CD14-positive monocyte (primary cell): ENCODE measurements at regions of chr6 and their contacts with region 1.

Region 1: DNA sequence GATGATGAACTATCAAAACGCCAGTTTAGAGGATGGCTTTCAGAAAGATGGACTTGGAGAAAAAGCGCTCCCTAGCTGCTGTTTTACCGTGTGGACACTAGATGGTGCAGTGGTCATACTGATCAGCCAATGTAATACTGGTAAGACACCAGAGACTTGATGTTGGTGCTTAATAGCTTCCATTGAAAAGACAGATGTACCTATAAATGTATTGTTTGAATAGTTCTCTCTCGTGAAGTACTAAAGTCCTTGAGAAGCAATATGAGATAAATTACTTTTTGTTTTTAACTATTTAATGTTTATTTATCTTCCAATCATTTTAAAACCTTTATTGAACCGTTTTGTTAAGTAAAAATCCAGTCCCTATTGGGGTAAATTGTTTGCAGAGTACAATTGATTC is 63.9 kb upstream of the FUCA2 start:
- DNase-seq: peak; percentile 60 to 80 (median 70)
- H3K4me3 ChIP-seq: no peak overlapping the region
- H3K4me3 Mint-ChIP-seq: no peak overlapping the region
- H3K27ac ChIP-seq: no peak overlapping the region
- H3K27ac Mint-ChIP-seq: no peak overlapping the region
- H3K4me1 ChIP-seq: peaks cover 3 to 6% of the 10 kb centered on the region in 2 donors
- H3K4me1 Mint-ChIP-seq: peaks cover 8% of the 10 kb centered on the region
- H3K27me3 ChIP-seq: no peaks in the 10 kb centered on the region
- H3K27me3 Mint-ChIP-seq: peaks cover 0 to 2% (median 0%) of the 10 kb centered on the region in 3 donors
- CTCF ChIP-seq: peak; percentile 86

Region 2: DNA sequence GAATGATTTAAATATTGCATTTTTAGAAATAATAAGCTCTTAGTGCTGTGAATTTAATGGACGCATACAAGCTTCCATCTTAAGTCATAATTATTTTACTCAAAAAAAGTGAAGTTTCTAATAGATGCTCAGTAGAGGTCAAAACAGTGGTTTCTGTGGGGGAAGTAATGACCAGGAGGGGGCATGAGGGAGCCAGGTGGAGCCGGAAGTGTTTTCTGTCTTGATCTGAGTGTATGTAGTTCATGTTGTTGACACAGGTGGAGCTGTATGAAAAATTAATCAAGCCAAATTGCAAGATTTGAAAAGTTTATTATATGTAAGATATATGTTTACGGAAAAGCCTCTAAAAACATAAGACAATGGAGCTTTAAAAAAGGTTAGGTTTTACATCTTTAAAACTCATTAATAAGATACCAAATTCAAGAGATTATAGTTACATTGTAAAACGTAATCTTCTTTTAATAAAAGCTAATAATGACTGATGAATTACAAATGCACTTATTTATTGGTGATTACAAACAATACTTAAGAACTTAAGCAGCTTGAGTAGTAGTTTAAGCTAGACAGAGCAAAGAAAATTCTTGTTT is 364.7 kb after region 1 on chr6:
- intact Hi-C with region 1: loop called in 1 of 2 experiments (anchors 5 kb)
- DNase-seq: peak; percentile 36 to 52 (median 42)
- H3K4me3 ChIP-seq: no peak overlapping the region
- H3K4me3 Mint-ChIP-seq: no peak overlapping the region
- H3K27ac ChIP-seq: no peak overlapping the region
- H3K27ac Mint-ChIP-seq: peak overlapping the region in 1 of 7 donors; percentile 76
- H3K4me1 ChIP-seq: peaks cover 29 to 30% of the 10 kb centered on the region in 2 donors
- H3K4me1 Mint-ChIP-seq: peaks cover 36% of the 10 kb centered on the region
- H3K27me3 ChIP-seq: no peaks in the 10 kb centered on the region
- H3K27me3 Mint-ChIP-seq: peaks cover 0 to 5% (median 2%) of the 10 kb centered on the region in 3 donors
- CTCF ChIP-seq: peak; percentile 87

Region 3: GRCh38 chr6:144013486-144013909 is 438.1 kb after region 1 on chr6:
- intact Hi-C with region 1: loop called (anchors 1 to 5 kb)
- DNase-seq: peak; percentile 56 to 82 (median 70)
- H3K4me3 ChIP-seq: no peak overlapping the region
- H3K4me3 Mint-ChIP-seq: no peak overlapping the region
- H3K27ac ChIP-seq: no peak overlapping the region
- H3K27ac Mint-ChIP-seq: no peak overlapping the region
- H3K4me1 ChIP-seq: peaks cover 13 to 18% of the 10 kb centered on the region in 2 donors
- H3K4me1 Mint-ChIP-seq: peaks cover 23% of the 10 kb centered on the region
- H3K27me3 ChIP-seq: no peaks in the 10 kb centered on the region
- H3K27me3 Mint-ChIP-seq: peaks cover 0 to 2% (median 0%) of the 10 kb centered on the region in 3 donors
- CTCF ChIP-seq: peak; percentile 94

Region 4: GRCh38 chr6:144104898-144105487 is 529.6 kb after region 1 on chr6:
- intact Hi-C with region 1: no loop called
- DNase-seq: peak; percentile 65 to 77 (median 71)
- H3K4me3 ChIP-seq: no peak overlapping the region
- H3K4me3 Mint-ChIP-seq: no peak overlapping the region
- H3K27ac ChIP-seq: no peak overlapping the region
- H3K27ac Mint-ChIP-seq: no peak overlapping the region
- H3K4me1 ChIP-seq: no peaks in the 10 kb centered on the region
- H3K4me1 Mint-ChIP-seq: peaks cover 3% of the 10 kb centered on the region
- H3K27me3 ChIP-seq: no peaks in the 10 kb centered on the region
- H3K27me3 Mint-ChIP-seq: peaks cover 0 to 2% (median 0%) of the 10 kb centered on the region in 3 donors
- CTCF ChIP-seq: peak; percentile 72